A549 (cell line): ENCODE measurements at regions of chr14 and their contacts with region 1.

Region 1: DNA sequence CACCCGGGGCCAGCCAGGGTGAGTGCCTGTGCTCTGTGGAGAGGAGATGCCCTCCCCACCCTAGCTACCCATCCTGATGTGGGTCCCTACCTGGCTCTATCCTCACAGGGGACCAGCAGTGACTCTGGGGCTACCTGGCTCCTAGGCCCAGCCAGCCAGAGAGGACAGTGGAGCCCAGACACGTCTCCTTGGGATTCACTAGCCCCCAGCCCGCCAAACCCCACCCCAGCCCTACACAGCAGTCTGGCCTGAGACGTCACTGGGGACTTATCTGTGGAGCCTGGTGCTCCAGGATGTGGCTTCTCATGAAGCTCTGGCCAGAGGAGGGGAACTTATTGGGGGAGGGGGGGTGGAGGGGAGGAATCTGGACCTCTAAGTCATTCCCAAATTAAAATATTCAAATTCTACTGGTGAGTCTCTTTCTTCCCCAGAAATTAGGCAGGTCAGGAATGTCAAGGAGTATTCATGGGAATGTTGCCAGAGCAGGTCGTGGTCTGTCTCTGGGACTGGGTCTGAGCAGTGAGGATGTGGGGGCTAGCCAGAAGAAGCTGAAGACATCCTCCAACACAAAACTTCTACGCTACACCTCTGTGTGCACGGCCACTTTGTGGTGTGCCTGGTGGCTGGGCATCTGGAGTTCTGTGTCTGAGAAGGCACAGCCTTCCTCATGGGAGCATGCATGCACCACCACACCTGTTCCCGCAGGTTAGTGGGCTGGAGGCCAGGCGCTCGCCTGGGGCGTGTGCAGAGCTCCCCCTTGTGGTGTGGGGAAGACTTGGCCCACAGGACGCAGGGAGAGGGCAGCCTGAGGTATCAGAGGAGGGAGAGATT is 2.7 kb downstream of the CMTM5 start:
- DNase-seq: peak; percentile 46 to 62
- ATAC-seq: peak; percentile 75 to 91; a peak in 4 of 6 replicates
- H3K4me3 ChIP-seq: no peak overlapping the region
- H3K27ac ChIP-seq: no peak overlapping the region
- H3K4me1 ChIP-seq: no peaks in the 10 kb centered on the region
- CTCF ChIP-seq: peak; percentile 86
- EP300 ChIP-seq: no peak
- POLR2A ChIP-seq: no peak
- RAD21 ChIP-seq: peak; percentile 84 to 89

Region 2: GRCh38 chr14:23269193-23269592 is 110.4 kb before region 1 on chr14:
- CTCF ChIA-PET with region 1: interaction called, 36 read pairs
- POLR2A ChIA-PET with region 1: no interaction called
- DNase-seq: no peak
- ATAC-seq: no peak
- H3K4me3 ChIP-seq: no peak overlapping the region
- H3K27ac ChIP-seq: no peak overlapping the region
- H3K4me1 ChIP-seq: no peaks in the 10 kb centered on the region
- CTCF ChIP-seq: no peak
- EP300 ChIP-seq: no peak
- POLR2A ChIP-seq: no peak
- RAD21 ChIP-seq: no peak

Region 3: DNA sequence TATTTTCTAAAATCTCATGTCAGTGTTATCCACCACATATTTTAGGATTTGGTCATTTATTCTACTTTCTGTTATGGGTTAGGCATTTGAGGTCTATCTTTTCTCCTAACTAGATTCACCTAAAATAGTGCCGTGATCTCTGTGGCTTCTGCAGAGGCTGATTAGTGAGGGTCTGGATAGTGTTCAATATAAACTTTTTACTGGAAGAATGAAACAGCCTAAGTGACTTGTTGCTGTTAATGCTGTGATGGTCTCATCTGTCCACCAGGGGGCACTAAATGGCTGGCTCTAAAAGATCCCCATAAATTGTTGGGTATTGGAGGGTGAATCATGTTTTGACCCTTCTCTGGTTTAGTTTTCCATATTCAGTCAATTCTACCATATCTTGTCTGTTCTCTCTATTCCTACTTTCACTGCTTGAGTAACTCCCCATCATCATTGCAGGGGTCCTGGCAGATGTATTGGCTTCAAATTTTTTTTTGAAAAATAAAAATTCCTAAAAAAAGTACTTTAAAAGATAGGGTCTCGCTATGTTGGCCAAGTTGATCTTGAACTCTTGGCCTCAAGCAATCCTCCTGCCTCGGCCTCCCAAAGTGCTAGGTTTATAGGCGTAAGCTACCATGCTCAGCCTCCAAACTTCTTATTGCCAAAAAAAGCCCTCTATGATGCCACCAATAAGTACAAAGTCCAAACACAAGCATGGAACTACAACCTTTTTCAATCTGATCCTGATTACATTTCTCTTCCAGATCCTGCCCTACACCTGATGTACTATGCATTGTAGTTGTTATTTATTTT is 51.4 kb before region 1 on chr14:
- CTCF ChIA-PET with region 1: interaction called, 186 read pairs
- POLR2A ChIA-PET with region 1: interaction called, 4 read pairs
- DNase-seq: peak; percentile 79 to 85
- ATAC-seq: peak; percentile 82 to 84
- H3K4me3 ChIP-seq: no peak overlapping the region
- H3K27ac ChIP-seq: no peak overlapping the region
- H3K4me1 ChIP-seq: peaks cover 10% of the 10 kb centered on the region
- CTCF ChIP-seq: peak; percentile 91
- EP300 ChIP-seq: no peak
- POLR2A ChIP-seq: no peak
- RAD21 ChIP-seq: peak; percentile 78 to 89

Region 4: DNA sequence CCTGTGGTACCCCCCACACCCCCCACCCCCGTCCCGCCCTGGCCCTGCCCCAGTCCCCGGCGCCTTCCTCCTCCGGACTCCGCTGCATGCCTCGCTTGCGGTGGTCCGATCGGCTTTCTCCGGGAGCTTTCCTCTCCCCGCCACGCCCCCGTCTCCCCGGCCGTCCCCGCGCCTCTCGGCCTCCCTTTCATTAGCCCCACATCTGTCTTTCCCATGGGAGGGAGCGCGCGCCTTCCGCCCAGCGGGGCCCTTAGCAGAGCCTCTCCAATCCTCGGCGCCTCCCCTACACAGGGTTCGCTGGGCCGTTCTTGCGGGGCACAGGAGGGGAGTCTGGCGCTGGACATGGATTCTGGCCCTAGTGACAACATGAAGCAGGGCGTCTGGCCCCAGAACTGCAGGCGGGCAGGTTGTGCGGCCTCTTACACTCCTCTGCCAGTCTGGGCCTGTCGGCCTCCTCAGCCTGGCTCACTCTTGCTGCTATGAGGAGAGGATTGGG is 13.1 kb before region 1 on chr14:
- CTCF ChIA-PET with region 1: interaction called, 80 read pairs
- POLR2A ChIA-PET with region 1: no interaction called
- DNase-seq: no peak
- ATAC-seq: no peak; a peak in 1 of 6 replicates
- H3K4me3 ChIP-seq: no peak overlapping the region
- H3K27ac ChIP-seq: no peak overlapping the region
- H3K4me1 ChIP-seq: no peaks in the 10 kb centered on the region
- CTCF ChIP-seq: no peak
- EP300 ChIP-seq: no peak
- POLR2A ChIP-seq: no peak
- RAD21 ChIP-seq: no peak

Region 5: GRCh38 chr14:23421594-23421993 is 42.0 kb after region 1 on chr14:
- CTCF ChIA-PET with region 1: interaction called, 10 read pairs
- POLR2A ChIA-PET with region 1: no interaction called
- DNase-seq: no peak
- ATAC-seq: no peak
- H3K4me3 ChIP-seq: no peak overlapping the region
- H3K27ac ChIP-seq: no peak overlapping the region
- H3K4me1 ChIP-seq: no peaks in the 10 kb centered on the region
- CTCF ChIP-seq: no peak
- EP300 ChIP-seq: no peak
- POLR2A ChIP-seq: no peak
- RAD21 ChIP-seq: no peak